ENCODE measurements at regions of chr6 and their contacts with region 1.

Region 1: DNA sequence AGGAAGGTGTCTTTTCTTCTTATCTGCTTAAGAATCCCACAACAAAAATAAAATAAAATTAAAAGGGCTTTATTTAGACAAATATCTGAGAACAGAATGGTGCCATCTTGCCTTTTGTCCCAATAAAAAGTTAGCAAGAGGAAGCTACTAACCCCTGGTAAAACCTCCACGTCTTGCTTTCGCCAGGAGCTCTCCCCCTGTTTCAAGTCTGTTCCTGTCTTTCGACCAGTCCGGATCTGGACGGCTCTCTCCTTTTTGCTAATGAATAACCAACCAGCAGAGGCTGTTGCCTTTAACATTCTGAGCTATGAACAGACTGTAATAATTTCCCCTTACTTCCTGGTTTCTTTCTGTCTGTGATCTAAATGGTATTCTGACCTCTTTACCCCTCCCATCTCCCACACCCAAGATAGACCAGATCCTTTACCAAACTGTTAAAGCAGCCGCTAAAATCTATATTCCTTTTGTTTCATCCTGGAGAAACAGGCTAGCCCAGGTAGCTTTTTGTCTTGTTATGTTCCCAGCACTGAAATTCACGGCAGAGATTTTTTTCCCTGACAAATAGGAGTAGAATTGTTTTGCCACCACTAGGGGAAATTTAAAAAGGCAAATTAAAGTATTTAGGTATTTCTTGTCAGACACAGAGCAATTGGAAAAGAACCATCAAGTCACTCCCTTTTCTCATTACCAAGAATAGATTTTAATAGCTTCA is at the start of gene FRK:
- DNase-seq: peak in 1 of 2 donors; percentile 48
- ATAC-seq: peak; percentile 87
- H3K4me3 ChIP-seq: peak within 1 kb of the TSS; percentile 94 to 98
- H3K27ac ChIP-seq: peak within 1 kb of the TSS; percentile 62 to 95
- H3K4me1 ChIP-seq: peaks cover 2 to 5% of the 10 kb centered on the region in 2 donors
- H3K27me3 ChIP-seq: no peaks in the 10 kb centered on the region
- total RNA-seq, gene FRK: 9.3 to 18.3 TPM

Region 2: DNA sequence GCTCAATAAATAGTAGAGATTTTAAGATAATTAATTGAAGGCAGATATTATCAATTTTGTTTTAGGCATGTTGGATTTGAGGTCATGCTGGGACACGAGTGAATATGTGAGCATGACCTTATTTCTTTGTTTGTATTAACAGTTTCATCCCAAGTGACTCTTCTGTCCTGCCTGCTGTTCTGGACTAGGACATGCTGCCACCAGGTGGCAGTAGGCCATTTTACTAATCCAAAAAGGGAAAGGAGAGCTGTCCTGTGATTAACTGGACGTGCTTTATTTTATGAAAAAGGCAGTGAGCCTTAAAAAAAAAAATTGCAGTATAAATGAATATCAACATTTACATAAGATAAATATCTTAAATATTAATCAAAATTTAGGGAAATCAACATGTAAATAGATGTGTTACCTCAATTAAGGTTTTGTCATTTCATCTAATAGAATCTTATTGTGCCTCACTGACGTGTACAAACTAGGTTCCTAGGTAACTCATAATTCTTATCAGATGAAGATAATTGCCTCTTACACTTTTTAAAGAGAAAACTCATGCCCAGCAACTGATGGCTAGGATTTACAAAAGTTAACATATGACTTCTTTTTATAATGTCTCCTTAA is 49.8 kb before region 1 on chr6:
- intact Hi-C with region 1: loop called (anchors 5 kb)
- DNase-seq: peak; percentile 79 to 85
- ATAC-seq: peak; percentile 81
- H3K4me3 ChIP-seq: no peak overlapping the region
- H3K27ac ChIP-seq: no peak overlapping the region
- H3K4me1 ChIP-seq: peaks cover 2 to 17% of the 10 kb centered on the region in 2 donors
- H3K27me3 ChIP-seq: no peaks in the 10 kb centered on the region

Region 3: GRCh38 chr6:116016846-116017545 is 43.7 kb before region 1 on chr6:
- intact Hi-C with region 1: loop called (anchors 5 kb)
- DNase-seq: no peak
- ATAC-seq: peak; percentile 33
- H3K4me3 ChIP-seq: peak overlapping the region; percentile 2 to 33
- H3K27ac ChIP-seq: peak overlapping the region; percentile 47 to 67
- H3K4me1 ChIP-seq: peaks cover 4 to 23% of the 10 kb centered on the region in 2 donors
- H3K27me3 ChIP-seq: no peaks in the 10 kb centered on the region

Region 4: GRCh38 chr6:116094041-116094440 is 33.3 kb after region 1 on chr6:
- intact Hi-C with region 1: loop called (anchors 2 to 5 kb)
- DNase-seq: no peak
- ATAC-seq: no peak
- H3K4me3 ChIP-seq: no peak overlapping the region
- H3K27ac ChIP-seq: peak overlapping the region; percentile 64 to 92
- H3K4me1 ChIP-seq: peaks cover 0 to 4% of the 10 kb centered on the region in 2 donors
- H3K27me3 ChIP-seq: no peaks in the 10 kb centered on the region

Region 5: GRCh38 chr6:116100419-116101301 is 39.9 kb after region 1 on chr6 and contains the start of gene NT5DC1:
- intact Hi-C with region 1: loop called (anchors 2 to 5 kb)
- DNase-seq: peak; percentile 91 to 95
- ATAC-seq: peak; percentile 96
- H3K4me3 ChIP-seq: peak within 1 kb of the TSS; percentile 74 to 92
- H3K27ac ChIP-seq: peak within 1 kb of the TSS; percentile 89 to 93
- H3K4me1 ChIP-seq: peaks cover 4 to 8% of the 10 kb centered on the region in 2 donors
- H3K27me3 ChIP-seq: no peaks in the 10 kb centered on the region
- total RNA-seq, gene NT5DC1: 42.9 to 47.5 TPM

Region 6: DNA sequence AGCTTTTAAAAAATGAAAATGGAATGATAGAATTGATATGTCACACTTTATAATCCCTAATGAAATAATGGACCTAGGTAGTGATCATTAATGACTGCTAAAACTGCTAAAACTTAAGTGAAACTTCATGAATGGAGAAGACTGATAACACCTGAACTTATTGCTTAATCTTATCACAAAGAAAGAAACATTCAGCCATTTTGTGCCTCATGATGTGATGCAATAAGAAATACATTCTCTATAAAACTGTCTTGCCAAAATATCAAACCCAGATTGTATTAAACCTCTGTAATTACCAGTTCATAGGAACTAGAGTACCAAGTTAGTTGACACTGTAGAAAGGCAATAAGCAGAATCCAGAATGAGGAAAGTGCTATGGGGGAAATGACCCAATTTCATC is 119.6 kb after region 1 on chr6:
- intact Hi-C with region 1: no loop called
- DNase-seq: no peak
- ATAC-seq: no peak
- H3K4me3 ChIP-seq: no peak overlapping the region
- H3K27ac ChIP-seq: no peak overlapping the region
- H3K4me1 ChIP-seq: no peaks in the 10 kb centered on the region
- H3K27me3 ChIP-seq: no peaks in the 10 kb centered on the region